Caco-2 (cell line): ENCODE measurements at regions of chr20 and their contacts with region 1.

Region 1: GRCh38 chr20:47379433-47380150 is 23.1 kb upstream of the ZMYND8 start:
- DNase-seq: no peak
- H3K4me3 ChIP-seq: no peak overlapping the region
- H3K4me3 Mint-ChIP-seq: no peak overlapping the region
- H3K27ac Mint-ChIP-seq: peak overlapping the region; percentile 2
- H3K4me1 ChIP-seq: peaks cover 15% of the 10 kb centered on the region
- H3K4me1 Mint-ChIP-seq: peaks cover 18% of the 10 kb centered on the region
- H3K27me3 ChIP-seq: no peaks in the 10 kb centered on the region
- H3K27me3 Mint-ChIP-seq: no peaks in the 10 kb centered on the region
- CTCF ChIP-seq: no peak

Region 2: GRCh38 chr20:46746956-46747526 is 632.6 kb before region 1 on chr20:
- CTCF ChIA-PET with region 1: no interaction called
- POLR2A ChIA-PET with region 1: no interaction called
- intact Hi-C with region 1: loop called (anchors 5 kb)
- DNase-seq: no peak
- H3K4me3 ChIP-seq: no peak overlapping the region
- H3K4me3 Mint-ChIP-seq: no peak overlapping the region
- H3K27ac Mint-ChIP-seq: no peak overlapping the region
- H3K4me1 ChIP-seq: peaks cover 11% of the 10 kb centered on the region; the same call in 1 of the 2 replicates
- H3K4me1 Mint-ChIP-seq: peaks cover 10% of the 10 kb centered on the region
- H3K27me3 ChIP-seq: no peaks in the 10 kb centered on the region; the same call in 1 of the 2 replicates
- H3K27me3 Mint-ChIP-seq: peaks cover 33% of the 10 kb centered on the region
- CTCF ChIP-seq: no peak

Region 3: GRCh38 chr20:47146703-47147102 is 232.9 kb before region 1 on chr20:
- CTCF ChIA-PET with region 1: no interaction called
- POLR2A ChIA-PET with region 1: no interaction called
- intact Hi-C with region 1: no loop called
- DNase-seq: peak; percentile 71 to 84
- H3K4me3 ChIP-seq: no peak overlapping the region
- H3K4me3 Mint-ChIP-seq: no peak overlapping the region
- H3K27ac Mint-ChIP-seq: peak overlapping the region; percentile 0
- H3K4me1 ChIP-seq: peaks cover 30% of the 10 kb centered on the region
- H3K4me1 Mint-ChIP-seq: peaks cover 55% of the 10 kb centered on the region
- H3K27me3 ChIP-seq: no peaks in the 10 kb centered on the region
- H3K27me3 Mint-ChIP-seq: no peaks in the 10 kb centered on the region
- CTCF ChIP-seq: no peak

Region 4: GRCh38 chr20:47220161-47220582 is 159.4 kb before region 1 on chr20:
- CTCF ChIA-PET with region 1: interaction called, 21 read pairs
- POLR2A ChIA-PET with region 1: no interaction called
- intact Hi-C with region 1: no loop called
- DNase-seq: peak; percentile 72 to 81
- H3K4me3 ChIP-seq: no peak overlapping the region
- H3K4me3 Mint-ChIP-seq: no peak overlapping the region
- H3K27ac Mint-ChIP-seq: no peak overlapping the region
- H3K4me1 ChIP-seq: no peaks in the 10 kb centered on the region
- H3K4me1 Mint-ChIP-seq: peaks cover 9% of the 10 kb centered on the region
- H3K27me3 ChIP-seq: no peaks in the 10 kb centered on the region
- H3K27me3 Mint-ChIP-seq: no peaks in the 10 kb centered on the region
- CTCF ChIP-seq: peak; percentile 85 to 93

Region 5: GRCh38 chr20:47296950-47297349 is 82.6 kb before region 1 on chr20:
- CTCF ChIA-PET with region 1: interaction called, 41 read pairs
- POLR2A ChIA-PET with region 1: no interaction called
- intact Hi-C with region 1: loop called (anchors 1 kb)
- DNase-seq: peak; percentile 52 to 63
- H3K4me3 ChIP-seq: no peak overlapping the region
- H3K4me3 Mint-ChIP-seq: no peak overlapping the region
- H3K27ac Mint-ChIP-seq: peak overlapping the region; percentile 1
- H3K4me1 ChIP-seq: no peaks in the 10 kb centered on the region
- H3K4me1 Mint-ChIP-seq: no peaks in the 10 kb centered on the region
- H3K27me3 ChIP-seq: no peaks in the 10 kb centered on the region
- H3K27me3 Mint-ChIP-seq: no peaks in the 10 kb centered on the region
- CTCF ChIP-seq: peak; percentile 21 to 62

Region 6: GRCh38 chr20:47330933-47331864 is 48.4 kb before region 1 on chr20:
- CTCF ChIA-PET with region 1: interaction called, 23 read pairs
- POLR2A ChIA-PET with region 1: interaction called, 3 read pairs
- intact Hi-C with region 1: no loop called
- DNase-seq: no peak
- H3K4me3 ChIP-seq: no peak overlapping the region
- H3K4me3 Mint-ChIP-seq: peak overlapping the region; percentile 0
- H3K27ac Mint-ChIP-seq: peak overlapping the region; percentile 39
- H3K4me1 ChIP-seq: peaks cover 66% of the 10 kb centered on the region
- H3K4me1 Mint-ChIP-seq: peaks cover 50% of the 10 kb centered on the region
- H3K27me3 ChIP-seq: no peaks in the 10 kb centered on the region
- H3K27me3 Mint-ChIP-seq: no peaks in the 10 kb centered on the region
- CTCF ChIP-seq: no peak

Region 7: DNA sequence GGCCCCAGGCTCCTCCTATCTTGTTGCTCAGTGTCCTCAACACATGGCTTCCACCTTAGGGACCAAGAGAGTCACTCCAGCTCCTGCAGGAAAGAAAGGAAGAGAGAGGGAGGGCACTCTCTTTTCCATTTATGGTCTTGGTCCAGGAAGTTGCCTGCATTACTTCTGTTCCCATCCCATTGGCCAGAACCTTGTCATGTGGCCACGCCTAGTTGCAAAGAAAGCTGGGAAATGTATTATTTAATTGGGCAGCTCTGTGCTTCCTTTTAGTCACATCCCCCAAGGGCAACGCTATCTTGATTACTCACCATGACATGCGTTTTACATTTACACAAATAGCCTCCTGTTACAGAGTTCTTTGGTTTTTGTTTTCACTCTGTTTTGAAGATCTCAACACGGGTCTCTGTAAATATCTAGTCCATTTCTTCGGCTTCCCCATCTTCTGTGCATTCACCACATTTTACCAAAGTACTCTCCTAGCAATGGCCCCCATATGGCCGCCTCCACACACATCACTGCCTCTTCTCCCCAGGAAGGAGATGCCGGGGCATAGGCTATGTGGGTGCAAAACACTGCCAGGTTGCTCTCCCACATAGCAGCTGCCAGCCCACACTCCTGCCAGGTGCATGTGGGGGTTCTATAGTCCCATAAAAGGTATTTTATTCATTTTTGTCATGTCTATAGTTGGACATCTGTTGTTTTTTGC is 12.6 kb after region 1 on chr20:
- CTCF ChIA-PET with region 1: interaction called, 14 read pairs
- POLR2A ChIA-PET with region 1: interaction called, 9 read pairs
- intact Hi-C with region 1: no loop called
- DNase-seq: peak; percentile 68 to 82
- H3K4me3 ChIP-seq: no peak overlapping the region
- H3K4me3 Mint-ChIP-seq: no peak overlapping the region
- H3K27ac Mint-ChIP-seq: peak overlapping the region; percentile 64
- H3K4me1 ChIP-seq: peaks cover 12% of the 10 kb centered on the region
- H3K4me1 Mint-ChIP-seq: peaks cover 21% of the 10 kb centered on the region
- H3K27me3 ChIP-seq: no peaks in the 10 kb centered on the region
- H3K27me3 Mint-ChIP-seq: no peaks in the 10 kb centered on the region
- CTCF ChIP-seq: no peak

Region 8: GRCh38 chr20:47501483-47502270 is 122.1 kb after region 1 on chr20 and contains the start of gene NCOA3:
- CTCF ChIA-PET with region 1: interaction called, 19 read pairs
- POLR2A ChIA-PET with region 1: interaction called, 10 read pairs
- intact Hi-C with region 1: no loop called
- DNase-seq: peak; percentile 100
- H3K4me3 ChIP-seq: peak within 1 kb of the TSS; percentile 98
- H3K4me3 Mint-ChIP-seq: peak within 1 kb of the TSS; percentile 82
- H3K27ac Mint-ChIP-seq: peak within 1 kb of the TSS; percentile 92
- H3K4me1 ChIP-seq: peaks cover 28% of the 10 kb centered on the region
- H3K4me1 Mint-ChIP-seq: peaks cover 35% of the 10 kb centered on the region
- H3K27me3 ChIP-seq: no peaks in the 10 kb centered on the region
- H3K27me3 Mint-ChIP-seq: no peaks in the 10 kb centered on the region
- CTCF ChIP-seq: peak; percentile 64 to 94
- total RNA-seq, gene NCOA3: 96.7 and 97.3 TPM in 2 replicates